ENCODE measurements at regions of chr19 and their contacts with region 1.

Region 1: GRCh38 chr19:28737021-28737895 is 475.7 kb downstream of the UQCRFS1 start:
- DNase-seq: no peak
- H3K4me3 ChIP-seq: no peak overlapping the region
- H3K27ac ChIP-seq: no peak overlapping the region
- H3K4me1 ChIP-seq: peaks cover 0 to 9% (median 3%) of the 10 kb centered on the region in 4 donors
- H3K27me3 ChIP-seq: no peaks in the 10 kb centered on the region
- CTCF ChIP-seq: peak; percentile 39 to 60 (median 50)
- EP300 ChIP-seq: no peak
- POLR2A ChIP-seq: no peak

Region 2: GRCh38 chr19:28836421-28836820 is 99.2 kb after region 1 on chr19:
- in situ Hi-C with region 1: no loop called
- intact Hi-C with region 1: no loop called
- DNase-seq: no peak
- H3K4me3 ChIP-seq: no peak overlapping the region
- H3K27ac ChIP-seq: no peak overlapping the region
- H3K4me1 ChIP-seq: no peaks in the 10 kb centered on the region
- H3K27me3 ChIP-seq: no peaks in the 10 kb centered on the region
- CTCF ChIP-seq: no peak
- EP300 ChIP-seq: no peak
- POLR2A ChIP-seq: no peak

Region 3: DNA sequence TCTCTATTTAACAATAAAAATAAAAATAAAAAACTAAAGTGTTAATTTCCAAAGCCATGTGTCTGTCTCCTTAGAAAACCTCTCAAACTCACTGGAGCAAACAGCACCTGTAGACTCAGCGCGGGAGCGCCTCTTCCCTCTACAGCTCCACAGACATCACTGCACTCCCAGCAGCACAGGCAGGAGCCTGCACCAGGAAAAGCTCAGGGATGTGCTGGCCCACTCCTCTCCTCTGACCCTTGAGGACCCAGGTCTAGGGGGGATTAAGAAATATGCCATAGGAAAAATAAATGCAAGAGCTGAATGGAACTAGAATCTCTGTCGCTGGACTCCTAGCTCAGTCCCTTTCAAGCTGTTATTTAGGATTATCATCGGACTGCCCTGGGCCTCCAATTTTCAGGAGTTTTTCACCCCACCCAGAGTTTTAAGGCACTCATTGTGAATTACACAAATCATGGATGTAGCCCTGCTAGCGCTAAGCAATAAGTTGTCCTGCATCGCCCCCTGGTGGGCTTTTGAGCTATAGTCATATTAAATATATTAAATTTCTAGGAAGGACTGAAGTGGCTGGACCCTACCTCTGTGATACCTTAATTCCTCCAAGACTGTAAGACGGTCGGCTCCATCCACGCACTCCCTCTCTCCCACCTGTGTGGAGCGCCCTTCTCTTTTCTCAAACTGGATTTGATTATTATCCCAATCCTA is 141.8 kb after region 1 on chr19:
- in situ Hi-C with region 1: loop called in 2 of 4 experiments (anchors 10 kb)
- intact Hi-C with region 1: loop called (anchors 5 kb)
- DNase-seq: peak; percentile 58
- H3K4me3 ChIP-seq: no peak overlapping the region
- H3K27ac ChIP-seq: no peak overlapping the region
- H3K4me1 ChIP-seq: peaks cover 0 to 5% (median 0%) of the 10 kb centered on the region in 4 donors
- H3K27me3 ChIP-seq: no peaks in the 10 kb centered on the region
- CTCF ChIP-seq: peak; percentile 64 to 74 (median 68)
- EP300 ChIP-seq: no peak
- POLR2A ChIP-seq: no peak

Region 4: DNA sequence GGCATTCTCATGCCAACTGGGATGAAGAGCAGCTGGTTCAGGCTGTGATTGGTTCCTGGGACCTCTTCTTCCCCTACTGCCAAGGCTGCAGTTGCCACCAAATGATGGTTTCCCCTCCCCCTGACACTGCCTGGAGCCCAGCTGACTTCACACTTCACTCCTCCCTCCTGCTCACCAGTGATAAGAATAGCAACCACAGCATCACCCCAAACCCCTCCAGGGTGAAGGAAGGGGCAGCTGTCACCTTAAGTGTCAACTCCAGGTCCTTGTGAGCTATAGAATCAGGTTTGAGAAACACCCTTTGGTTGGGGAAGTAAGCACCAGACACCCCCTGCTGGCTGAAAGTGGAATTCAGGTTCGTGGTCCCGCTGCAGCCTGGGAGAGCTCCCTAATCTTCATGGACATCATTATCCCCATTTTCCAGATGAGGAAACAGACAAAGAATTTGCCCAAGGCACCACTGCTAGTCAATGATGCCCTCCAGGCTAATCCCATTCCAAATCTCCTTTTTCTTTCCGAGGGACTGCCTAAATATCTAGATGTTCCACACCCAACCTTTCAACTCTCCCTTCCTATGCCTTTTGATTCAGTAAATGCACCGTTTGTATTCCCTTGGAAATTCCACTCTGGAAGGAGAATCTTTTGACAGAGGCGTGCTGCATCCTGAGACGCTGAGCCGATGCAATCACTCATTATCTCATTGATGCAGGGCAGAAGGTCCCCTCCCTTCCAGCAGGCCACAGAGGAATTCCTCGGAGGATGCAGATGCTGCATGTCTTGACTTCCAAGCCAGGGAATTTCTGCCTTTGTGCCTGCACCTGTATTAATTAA is 526.3 kb after region 1 on chr19:
- in situ Hi-C with region 1: loop called (anchors 25 kb)
- intact Hi-C with region 1: no loop called
- DNase-seq: peak; percentile 34
- H3K4me3 ChIP-seq: no peak overlapping the region
- H3K27ac ChIP-seq: no peak overlapping the region
- H3K4me1 ChIP-seq: no peaks in the 10 kb centered on the region
- H3K27me3 ChIP-seq: peaks cover 4% of the 10 kb centered on the region
- CTCF ChIP-seq: peak; percentile 50 to 74 (median 67)
- EP300 ChIP-seq: no peak
- POLR2A ChIP-seq: no peak

Measured in transverse colon (tissue), 4 donors.